ENCODE measurements at regions of chr2 and their contacts with region 1.

Region 1: GRCh38 chr2:204177977-204178540 is 241.5 kb downstream of the ICOS start:
- DNase-seq: peak; percentile 34 to 52
- ATAC-seq: peak in 6 of 8 donors; percentile 46 to 77 (median 62)
- H3K4me3 ChIP-seq: no peak overlapping the region
- H3K27ac ChIP-seq: no peak overlapping the region
- H3K4me1 ChIP-seq: peaks cover 0 to 14% (median 4%) of the 10 kb centered on the region in 9 donors
- H3K27me3 ChIP-seq: no peaks in the 10 kb centered on the region
- CTCF ChIP-seq: peak; percentile 46 to 77 (median 70)

Region 2: GRCh38 chr2:203484266-203485112 is 693.6 kb before region 1 on chr2:
- intact Hi-C with region 1: no loop called
- DNase-seq: peak in 1 of 2 donors; percentile 19
- ATAC-seq: peak; percentile 71 to 91 (median 82)
- H3K4me3 ChIP-seq: no peak overlapping the region
- H3K27ac ChIP-seq: no peak overlapping the region
- H3K4me1 ChIP-seq: peaks cover 0 to 6% (median 0%) of the 10 kb centered on the region in 9 donors
- H3K27me3 ChIP-seq: no peaks in the 10 kb centered on the region
- CTCF ChIP-seq: peak; percentile 48 to 79 (median 70)

Region 3: DNA sequence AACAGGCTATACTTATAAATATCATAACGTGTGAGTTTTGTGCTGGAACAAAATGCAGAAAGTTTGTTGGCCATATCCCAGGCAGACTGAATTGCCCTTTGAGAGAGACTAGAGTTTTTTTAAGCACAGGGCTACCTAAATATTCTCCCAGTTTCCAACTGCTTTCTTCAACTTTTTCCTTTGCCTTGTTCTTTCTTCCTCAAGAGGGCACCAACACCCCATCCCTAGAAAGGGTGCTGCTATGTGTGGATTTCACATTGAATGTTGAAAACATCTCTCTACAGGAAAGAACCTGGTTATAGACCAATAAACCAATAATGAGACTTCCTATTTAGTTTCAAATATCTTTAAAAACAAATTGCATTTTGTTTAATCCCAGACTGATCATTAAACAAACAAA is 153.6 kb before region 1 on chr2:
- intact Hi-C with region 1: loop called in 3 of 10 experiments (anchors 10 kb)
- DNase-seq: no peak
- ATAC-seq: peak in 4 of 8 donors; percentile 33 to 61 (median 51)
- H3K4me3 ChIP-seq: no peak overlapping the region
- H3K27ac ChIP-seq: no peak overlapping the region
- H3K4me1 ChIP-seq: no peaks in the 10 kb centered on the region
- H3K27me3 ChIP-seq: peaks cover 0 to under 1% (median 0%) of the 10 kb centered on the region in 7 donors
- CTCF ChIP-seq: peak in 7 of 9 donors; percentile 40 to 68 (median 59)

Region 4: DNA sequence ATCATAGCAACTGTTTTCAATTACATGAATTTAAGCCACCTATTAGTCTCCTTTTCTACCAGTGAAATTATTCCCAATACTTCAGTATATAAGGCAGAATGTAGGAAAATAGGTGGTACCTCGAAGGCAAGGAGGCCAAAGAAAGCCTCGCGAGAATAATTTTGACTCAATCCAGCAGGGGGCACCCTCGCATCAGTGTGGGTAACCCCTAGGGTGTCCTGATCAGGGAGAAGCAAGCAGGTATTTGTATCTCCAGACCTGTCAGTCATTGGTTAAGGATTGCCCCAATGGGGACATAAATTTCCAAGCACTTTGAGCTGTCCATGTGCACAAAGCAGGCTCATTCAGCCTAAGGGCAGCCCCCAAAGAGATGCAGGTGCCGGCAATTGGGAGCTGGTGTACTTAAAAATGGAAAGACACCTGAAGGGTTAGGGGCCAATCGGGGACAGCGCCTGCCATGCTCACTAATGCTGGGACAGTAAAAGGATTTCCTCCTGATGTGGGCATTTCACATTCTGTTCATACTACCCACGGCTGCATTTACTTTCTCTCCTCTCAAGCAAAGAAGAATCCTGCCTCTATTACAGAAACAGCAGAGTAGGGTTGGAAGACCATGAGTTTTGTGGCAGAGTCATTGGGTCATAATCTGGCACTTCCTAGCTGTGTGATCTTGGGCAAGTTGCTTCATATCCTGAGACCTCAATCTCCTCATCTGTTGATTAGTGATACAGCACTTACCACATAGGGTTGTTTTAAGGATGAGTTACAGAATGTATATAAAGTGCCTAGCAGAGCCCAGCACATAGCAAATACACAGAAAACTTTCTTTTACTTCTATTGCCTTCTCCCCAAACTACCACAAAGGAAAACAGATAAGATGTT is 105.4 kb before region 1 on chr2:
- intact Hi-C with region 1: loop called in 1 of 10 experiments (anchors 10 kb)
- DNase-seq: no peak
- ATAC-seq: no peak
- H3K4me3 ChIP-seq: no peak overlapping the region
- H3K27ac ChIP-seq: no peak overlapping the region
- H3K4me1 ChIP-seq: no peaks in the 10 kb centered on the region
- H3K27me3 ChIP-seq: peaks cover 0 to 21% (median 10%) of the 10 kb centered on the region in 7 donors
- CTCF ChIP-seq: peak in 7 of 9 donors; percentile 30 to 58 (median 44)

Region 5: DNA sequence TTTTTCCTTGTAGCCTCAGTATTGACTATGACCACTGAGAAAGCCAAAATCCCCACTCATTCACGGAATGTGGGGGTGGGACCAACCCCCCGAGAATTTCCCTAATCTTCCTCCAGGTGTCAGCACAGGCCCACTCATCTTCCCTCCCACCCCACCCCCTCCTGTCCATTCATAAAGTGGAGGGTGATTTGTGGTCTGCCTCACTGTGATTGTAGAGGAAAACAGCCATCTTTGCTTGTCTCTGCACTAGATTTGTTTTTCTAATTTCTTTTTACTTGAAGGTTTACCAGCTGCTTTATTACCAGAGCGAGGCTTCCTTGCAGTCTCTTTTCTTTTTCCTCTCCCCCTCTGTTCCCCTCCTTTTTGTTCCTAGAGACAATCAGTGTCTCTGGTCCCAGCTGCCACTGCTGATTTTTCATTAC is 69.7 kb before region 1 on chr2:
- intact Hi-C with region 1: loop called in 4 of 10 experiments (anchors 2 to 5 kb)
- DNase-seq: peak in 1 of 2 donors; percentile 16
- ATAC-seq: peak; percentile 44 to 81 (median 74)
- H3K4me3 ChIP-seq: no peak overlapping the region
- H3K27ac ChIP-seq: peak overlapping the region in 6 of 10 donors; percentile 0 to 69 (median 38)
- H3K4me1 ChIP-seq: peaks cover 0 to 40% (median 34%) of the 10 kb centered on the region in 9 donors
- H3K27me3 ChIP-seq: no peaks in the 10 kb centered on the region
- CTCF ChIP-seq: peak; percentile 27 to 74 (median 67)

Region 6: GRCh38 chr2:204145263-204145751 is 32.8 kb before region 1 on chr2:
- intact Hi-C with region 1: loop called in 5 of 10 experiments (anchors 1 to 5 kb)
- DNase-seq: peak; percentile 74 to 79
- ATAC-seq: peak; percentile 87 to 98 (median 96)
- H3K4me3 ChIP-seq: peak overlapping the region; percentile 14 to 59 (median 44)
- H3K27ac ChIP-seq: peak overlapping the region in 6 of 10 donors; percentile 28 to 66 (median 53)
- H3K4me1 ChIP-seq: peaks cover 0 to 11% (median 6%) of the 10 kb centered on the region in 9 donors
- H3K27me3 ChIP-seq: peaks cover 0 to 5% (median 0%) of the 10 kb centered on the region in 7 donors
- CTCF ChIP-seq: peak in 8 of 9 donors; percentile 89 to 98 (median 96)

Region 7: DNA sequence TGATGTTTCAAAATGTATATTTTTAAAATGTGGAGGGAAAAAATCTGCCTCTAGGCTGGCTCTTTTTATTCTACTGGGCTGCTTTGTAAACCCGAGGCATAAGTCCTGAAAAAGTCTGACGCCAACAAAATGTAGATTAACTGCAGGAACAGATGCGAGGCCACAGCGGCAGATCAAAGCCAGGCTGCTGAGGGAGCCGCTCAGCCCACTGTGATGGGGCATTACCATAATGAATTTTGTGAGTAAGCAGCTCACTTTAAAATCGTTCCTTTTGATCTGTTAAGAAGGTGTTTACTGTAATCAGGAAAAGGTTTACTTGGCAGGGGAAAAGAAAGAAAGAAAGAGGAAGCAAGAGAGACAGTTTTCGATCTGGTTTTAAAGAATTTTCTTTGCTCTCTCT is 27.5 kb after region 1 on chr2:
- intact Hi-C with region 1: no loop called
- DNase-seq: no peak
- ATAC-seq: no peak
- H3K4me3 ChIP-seq: no peak overlapping the region
- H3K27ac ChIP-seq: no peak overlapping the region
- H3K4me1 ChIP-seq: no peaks in the 10 kb centered on the region
- H3K27me3 ChIP-seq: peaks cover 0 to 8% (median 3%) of the 10 kb centered on the region in 7 donors
- CTCF ChIP-seq: no peak

Measured in heart right ventricle (tissue), 16 donors.